Caco-2 (cell line): ENCODE measurements at regions of chr9 and their contacts with region 1.

Region 1: GRCh38 chr9:96116275-96117064 is 185.5 kb downstream of the HSD17B3 start:
- DNase-seq: peak; percentile 26 to 50
- H3K4me3 ChIP-seq: no peak overlapping the region
- H3K4me3 Mint-ChIP-seq: peak overlapping the region; percentile 22
- H3K27ac Mint-ChIP-seq: no peak overlapping the region
- H3K4me1 ChIP-seq: peaks cover 12% of the 10 kb centered on the region; the same call in 1 of the 2 replicates
- H3K4me1 Mint-ChIP-seq: peaks cover 10% of the 10 kb centered on the region
- H3K27me3 ChIP-seq: no peaks in the 10 kb centered on the region
- H3K27me3 Mint-ChIP-seq: no peaks in the 10 kb centered on the region
- CTCF ChIP-seq: no peak

Region 2: DNA sequence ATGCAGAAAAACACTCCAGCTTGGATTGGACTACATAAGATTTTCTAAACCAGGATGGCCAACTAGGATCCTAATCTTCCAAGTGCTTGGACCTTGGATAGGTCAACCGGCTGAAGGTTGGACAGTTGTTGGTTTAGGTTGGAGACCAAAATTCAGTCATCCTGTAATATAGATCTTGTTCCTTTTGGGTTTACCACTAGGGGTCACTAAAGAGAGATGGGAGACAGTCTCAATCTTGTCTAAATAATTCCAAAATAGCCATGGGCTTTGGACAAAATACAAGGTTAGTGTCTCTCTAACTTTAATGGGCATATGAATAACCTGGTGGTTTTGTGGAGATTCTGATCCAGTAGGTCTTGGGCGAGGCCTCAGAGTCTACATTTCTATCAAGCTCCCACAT is 389.7 kb before region 1 on chr9:
- CTCF ChIA-PET with region 1: no interaction called
- POLR2A ChIA-PET with region 1: no interaction called
- intact Hi-C with region 1: loop called (anchors 10 kb)
- DNase-seq: peak in 1 of 2 experiments; percentile 34
- H3K4me3 ChIP-seq: no peak overlapping the region
- H3K4me3 Mint-ChIP-seq: no peak overlapping the region
- H3K27ac Mint-ChIP-seq: no peak overlapping the region
- H3K4me1 ChIP-seq: peaks cover 3% of the 10 kb centered on the region
- H3K4me1 Mint-ChIP-seq: peaks cover 16% of the 10 kb centered on the region
- H3K27me3 ChIP-seq: no peaks in the 10 kb centered on the region
- H3K27me3 Mint-ChIP-seq: no peaks in the 10 kb centered on the region
- CTCF ChIP-seq: peak; percentile 40 to 50

Region 3: DNA sequence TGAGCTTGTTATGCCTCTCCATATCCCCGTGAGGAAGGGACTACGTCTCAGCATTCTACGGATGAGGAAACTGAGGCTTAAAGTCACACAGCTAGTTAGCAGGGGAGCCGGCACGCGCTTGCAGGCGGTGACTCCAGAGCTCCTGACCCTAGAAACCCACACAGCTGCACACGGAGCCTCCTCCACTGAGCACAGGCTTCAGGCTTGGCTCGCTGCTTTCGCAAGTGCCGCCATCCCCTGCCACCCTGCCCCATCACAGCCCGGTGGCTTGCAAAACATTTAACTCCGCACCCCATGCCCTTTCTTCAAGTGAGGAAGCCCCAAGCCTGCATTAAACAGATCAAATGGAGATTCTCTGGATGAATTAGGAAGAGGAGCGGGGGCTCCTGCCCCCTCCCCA is 47.2 kb after region 1 on chr9:
- CTCF ChIA-PET with region 1: interaction called, 10 read pairs
- POLR2A ChIA-PET with region 1: no interaction called
- intact Hi-C with region 1: no loop called
- DNase-seq: no peak
- H3K4me3 ChIP-seq: no peak overlapping the region
- H3K4me3 Mint-ChIP-seq: no peak overlapping the region
- H3K27ac Mint-ChIP-seq: no peak overlapping the region
- H3K4me1 ChIP-seq: peaks cover 14% of the 10 kb centered on the region
- H3K4me1 Mint-ChIP-seq: peaks cover 6% of the 10 kb centered on the region
- H3K27me3 ChIP-seq: no peaks in the 10 kb centered on the region
- H3K27me3 Mint-ChIP-seq: no peaks in the 10 kb centered on the region
- CTCF ChIP-seq: no peak